A549 (cell line): ENCODE measurements at regions of chr11 and their contacts with region 1.

Region 1: DNA sequence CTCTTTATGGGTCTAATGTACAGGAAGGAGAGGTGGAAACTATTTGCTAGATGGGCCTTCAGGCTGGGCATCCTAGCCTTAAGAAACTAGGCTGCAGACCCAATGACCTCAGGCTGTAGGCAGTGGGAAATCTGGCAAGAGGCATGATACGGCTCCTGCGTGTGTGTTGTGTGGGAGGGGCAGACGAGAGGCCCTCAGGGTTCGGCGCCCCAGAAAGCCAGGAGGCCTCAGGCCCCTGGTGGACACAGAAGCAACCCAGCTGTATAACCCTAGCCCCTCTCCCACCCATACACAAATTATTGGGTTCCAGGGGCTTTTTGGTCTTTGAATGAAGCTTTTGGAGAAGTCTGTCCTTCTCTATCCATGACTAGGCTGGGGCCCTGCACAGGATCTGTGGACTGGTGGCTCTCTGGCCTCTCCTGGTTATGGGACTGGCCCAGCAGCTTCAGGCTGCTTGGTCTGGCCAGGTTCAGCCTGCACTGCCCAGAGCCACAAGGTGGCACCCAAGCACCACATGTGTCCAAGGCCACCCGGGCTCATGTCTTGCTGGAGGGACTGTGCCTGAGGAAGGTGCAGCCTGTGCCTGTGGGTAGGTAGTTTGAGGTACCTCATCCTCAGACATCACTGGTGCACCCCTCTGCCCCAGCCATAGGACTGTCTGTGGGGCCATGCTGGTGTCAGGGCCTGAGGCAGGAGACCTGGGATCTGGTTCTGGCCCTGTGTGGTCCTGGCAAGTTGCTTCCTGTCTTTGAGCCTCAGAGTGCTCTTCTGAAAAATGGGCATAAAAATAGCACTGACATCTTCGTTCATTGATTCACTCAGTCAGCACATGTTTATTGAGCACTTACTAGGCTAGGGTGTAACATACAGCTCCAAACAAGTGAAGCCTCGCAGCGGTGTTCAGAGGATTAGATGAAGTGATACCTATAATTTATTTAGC is 87.5 kb downstream of the RRM1 start:
- DNase-seq: peak; percentile 78 to 83
- ATAC-seq: peak; percentile 83 to 94
- H3K4me3 ChIP-seq: no peak overlapping the region
- H3K27ac ChIP-seq: no peak overlapping the region
- H3K4me1 ChIP-seq: no peaks in the 10 kb centered on the region
- CTCF ChIP-seq: peak; percentile 74
- EP300 ChIP-seq: no peak
- POLR2A ChIP-seq: no peak
- RAD21 ChIP-seq: peak; percentile 82 to 85

Region 2: DNA sequence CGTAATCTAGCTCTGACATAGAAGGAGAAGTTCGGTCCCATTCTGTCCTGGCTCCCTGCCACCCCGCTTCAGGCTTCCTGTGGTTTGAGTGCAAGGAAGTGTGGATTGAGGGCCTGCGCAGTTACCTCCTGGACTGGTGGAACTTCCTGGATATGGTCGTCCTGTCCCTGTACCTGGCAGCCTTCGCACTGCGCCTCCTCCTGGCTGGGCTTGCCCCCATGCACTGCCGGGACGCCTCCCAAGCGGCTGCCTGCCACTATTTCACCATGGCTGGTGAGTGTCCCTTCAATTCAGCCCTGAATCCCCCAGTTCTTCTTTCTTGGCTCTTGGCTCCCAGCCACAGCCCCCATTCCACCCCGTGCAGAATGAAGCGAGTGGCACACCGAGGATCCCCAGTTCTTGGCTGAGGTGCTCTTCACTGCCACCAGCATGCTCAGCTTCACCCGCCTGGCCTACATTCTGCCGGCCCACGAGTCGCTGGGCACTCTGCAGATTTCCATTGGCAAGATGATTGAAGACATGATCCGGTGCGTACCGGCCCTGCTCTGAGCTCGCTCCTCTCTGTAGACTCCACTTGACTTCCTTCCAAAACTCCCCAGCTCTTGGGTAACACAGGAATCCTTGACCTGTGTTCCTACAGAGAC is 555.6 kb before region 1 on chr11:
- CTCF ChIA-PET with region 1: no interaction called
- POLR2A ChIA-PET with region 1: no interaction called
- DNase-seq: no peak
- ATAC-seq: peak in 1 of 2 experiments; percentile 24; a peak in 1 of 6 replicates
- H3K4me3 ChIP-seq: no peak overlapping the region
- H3K27ac ChIP-seq: peak overlapping the region in 1 of 2 experiments; percentile 10; a peak in 1 of 6 replicates
- H3K4me1 ChIP-seq: no peaks in the 10 kb centered on the region
- CTCF ChIP-seq: no peak
- EP300 ChIP-seq: no peak
- POLR2A ChIP-seq: no peak
- RAD21 ChIP-seq: no peak

Region 3: DNA sequence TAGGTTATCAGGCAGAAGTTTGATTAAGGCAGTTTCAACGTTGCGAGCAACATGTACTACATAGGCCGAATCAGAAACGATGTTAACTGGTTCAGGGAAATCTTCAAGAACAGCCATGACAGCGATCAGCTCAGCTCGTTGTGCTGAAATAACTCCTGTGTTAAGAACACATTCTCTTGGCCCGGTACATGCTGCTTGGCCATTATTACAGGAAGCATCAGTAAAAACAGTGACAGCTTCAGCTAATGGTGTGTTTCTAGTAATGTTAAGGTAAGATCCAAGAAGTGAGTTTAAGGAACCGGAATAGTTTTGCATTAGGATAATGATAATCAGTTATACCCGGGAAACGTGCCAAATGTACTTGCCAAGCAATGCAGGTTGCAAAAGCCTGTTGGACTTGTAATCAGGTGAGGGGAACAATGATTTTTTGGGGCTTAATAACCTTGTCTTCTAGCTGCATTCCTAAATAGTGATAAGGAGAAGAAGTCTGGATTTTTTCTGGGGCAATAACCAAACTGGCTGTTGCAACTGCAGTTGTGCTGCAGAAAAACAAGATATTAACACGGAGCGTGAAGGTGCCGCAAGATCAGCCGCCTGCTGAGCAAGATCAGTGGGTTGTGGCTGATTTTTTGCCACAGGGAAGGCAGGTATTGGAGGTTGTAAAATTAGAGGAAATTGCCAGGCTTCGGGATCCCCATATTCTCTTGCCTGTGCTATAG is 314.7 kb after region 1 on chr11:
- CTCF ChIA-PET with region 1: interaction called, 96 read pairs
- POLR2A ChIA-PET with region 1: no interaction called
- DNase-seq: no peak
- ATAC-seq: no peak
- H3K4me3 ChIP-seq: no peak overlapping the region
- H3K27ac ChIP-seq: no peak overlapping the region
- H3K4me1 ChIP-seq: no peaks in the 10 kb centered on the region
- CTCF ChIP-seq: no peak
- EP300 ChIP-seq: no peak
- POLR2A ChIP-seq: no peak
- RAD21 ChIP-seq: no peak

Region 4: DNA sequence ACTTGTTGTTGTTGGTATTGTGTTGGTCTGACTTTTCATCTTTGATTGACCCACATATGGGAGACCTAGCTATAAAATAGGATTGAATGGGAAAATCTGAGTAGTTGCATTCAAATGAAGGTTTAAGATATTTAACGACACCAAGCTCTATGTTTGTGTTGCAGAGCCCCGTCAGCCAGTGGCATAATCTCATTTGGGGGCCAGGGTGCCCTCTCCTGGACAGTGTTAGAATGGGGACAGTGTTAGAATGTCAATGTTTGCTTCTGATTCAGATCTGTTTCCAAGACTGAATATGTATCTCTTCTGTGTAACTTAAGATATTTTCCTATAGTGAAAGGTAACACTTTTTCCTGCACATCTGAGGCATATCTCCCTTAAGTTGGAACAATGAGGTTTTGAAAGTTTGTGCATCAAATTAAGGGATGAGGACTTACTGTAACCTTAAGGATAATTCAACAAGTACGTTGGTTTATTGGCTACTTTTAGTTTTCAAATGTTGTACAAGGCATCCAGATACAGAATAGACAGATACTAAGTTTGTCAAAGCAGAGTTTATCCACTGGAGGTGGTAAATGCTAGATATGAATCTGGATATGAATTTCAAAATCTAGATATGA is 357.7 kb after region 1 on chr11:
- CTCF ChIA-PET with region 1: interaction called, 98 read pairs
- POLR2A ChIA-PET with region 1: no interaction called
- DNase-seq: peak; percentile 30 to 43
- ATAC-seq: peak; percentile 93 to 96
- H3K4me3 ChIP-seq: no peak overlapping the region
- H3K27ac ChIP-seq: no peak overlapping the region
- H3K4me1 ChIP-seq: no peaks in the 10 kb centered on the region
- CTCF ChIP-seq: peak; percentile 70
- EP300 ChIP-seq: no peak
- POLR2A ChIP-seq: no peak
- RAD21 ChIP-seq: peak; percentile 53 to 54; a peak in 4 of 5 replicates

Region 5: GRCh38 chr11:4551346-4551979 is 369.4 kb after region 1 on chr11:
- CTCF ChIA-PET with region 1: interaction called, 31 read pairs
- POLR2A ChIA-PET with region 1: no interaction called
- DNase-seq: peak in 1 of 2 experiments; percentile 19
- ATAC-seq: peak; percentile 73 to 87; a peak in 5 of 6 replicates
- H3K4me3 ChIP-seq: no peak overlapping the region
- H3K27ac ChIP-seq: no peak overlapping the region
- H3K4me1 ChIP-seq: peaks cover 13% of the 10 kb centered on the region; the same call in 2 of the 3 replicates
- CTCF ChIP-seq: peak; percentile 32; the same call in 1 of the 3 replicates
- EP300 ChIP-seq: no peak
- POLR2A ChIP-seq: no peak
- RAD21 ChIP-seq: peak in 1 of 2 experiments; percentile 34; a peak in 2 of 5 replicates